ENCODE measurements at regions of chr14 and their contacts with region 1.

Region 1: GRCh38 chr14:61638595-61639387 is 56.5 kb upstream of the HIF1A start:
- DNase-seq: no peak
- H3K4me3 ChIP-seq: no peak overlapping the region
- H3K4me3 Mint-ChIP-seq: no peak overlapping the region
- H3K27ac ChIP-seq: no peak overlapping the region
- H3K27ac Mint-ChIP-seq: no peak overlapping the region
- H3K4me1 ChIP-seq: no peaks in the 10 kb centered on the region
- H3K4me1 Mint-ChIP-seq: peaks cover 0 to 6% (median 1%) of the 10 kb centered on the region in 4 donors
- H3K27me3 ChIP-seq: no peaks in the 10 kb centered on the region
- H3K27me3 Mint-ChIP-seq: no peaks in the 10 kb centered on the region

Region 2: DNA sequence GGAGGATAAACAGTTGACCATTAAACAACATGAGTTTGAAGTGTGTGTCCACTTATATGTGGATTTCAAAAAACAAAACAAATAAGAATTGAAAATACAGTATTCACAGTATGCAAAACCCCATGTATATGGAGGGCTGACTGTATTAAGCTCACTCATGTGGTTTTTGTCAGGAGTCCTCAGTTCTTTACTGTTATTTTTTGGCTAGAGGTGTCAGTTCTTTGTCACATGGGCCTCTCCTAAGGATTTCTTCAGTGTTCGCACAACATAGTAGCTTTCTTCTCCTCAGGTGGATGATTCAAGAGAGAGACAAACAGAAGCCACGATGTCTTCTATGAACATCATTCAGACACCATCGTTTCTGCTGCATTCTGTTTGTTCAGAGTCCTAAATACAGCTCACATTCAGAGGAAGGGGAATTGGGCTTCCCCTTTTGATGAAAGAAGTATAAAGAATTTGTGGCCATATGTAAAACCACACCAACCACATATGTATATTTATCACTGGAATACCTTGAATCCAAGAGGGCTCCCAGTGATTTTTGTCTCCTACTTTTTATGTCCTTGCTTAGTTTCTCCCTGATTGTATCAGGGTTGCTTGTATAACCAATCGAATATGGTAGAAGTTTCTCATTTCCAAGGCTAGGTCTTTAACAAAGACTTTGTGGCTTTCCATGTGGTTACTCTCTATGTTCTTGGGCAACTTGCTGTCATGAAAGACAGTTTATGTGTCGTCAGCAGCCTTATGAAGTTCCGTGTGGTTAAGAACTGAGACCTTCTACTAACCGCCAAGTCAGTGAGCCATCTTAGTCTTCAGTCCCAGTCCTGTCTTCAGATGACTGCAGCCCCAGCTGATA is 885.3 kb before region 1 on chr14:
- CTCF ChIA-PET with region 1: no interaction called
- POLR2A ChIA-PET with region 1: no interaction called
- intact Hi-C with region 1: no loop called
- DNase-seq: peak; percentile 75 to 83 (median 79)
- H3K4me3 ChIP-seq: no peak overlapping the region
- H3K4me3 Mint-ChIP-seq: peak overlapping the region in 6 of 8 donors; percentile 40 to 69 (median 60)
- H3K27ac ChIP-seq: no peak overlapping the region
- H3K27ac Mint-ChIP-seq: peak overlapping the region; percentile 69 to 88 (median 83)
- H3K4me1 ChIP-seq: peaks cover 29% of the 10 kb centered on the region
- H3K4me1 Mint-ChIP-seq: peaks cover 20 to 27% (median 24%) of the 10 kb centered on the region in 4 donors
- H3K27me3 ChIP-seq: no peaks in the 10 kb centered on the region
- H3K27me3 Mint-ChIP-seq: peaks cover 0 to 1% of the 10 kb centered on the region in 2 donors

Region 3: DNA sequence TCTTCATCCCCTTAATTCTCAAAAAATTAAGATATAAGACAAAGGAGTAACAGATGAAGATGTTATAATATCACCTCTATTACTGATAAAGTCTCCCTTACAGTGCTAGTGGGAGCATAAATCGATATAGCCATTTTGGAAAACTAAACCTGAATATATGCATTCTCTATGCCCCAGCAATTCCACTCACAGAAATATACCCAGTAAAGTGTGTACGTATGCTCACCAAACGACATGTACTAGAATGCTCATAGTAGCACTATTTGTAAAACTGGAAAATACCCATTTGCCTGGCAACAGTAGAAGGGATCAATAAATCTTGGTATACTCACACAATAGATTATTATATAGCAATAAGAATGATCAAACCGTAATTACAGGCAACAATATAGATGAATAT is 12.6 kb after region 1 on chr14:
- CTCF ChIA-PET with region 1: no interaction called
- POLR2A ChIA-PET with region 1: no interaction called
- intact Hi-C with region 1: loop called (anchors 1 kb)
- DNase-seq: no peak
- H3K4me3 ChIP-seq: no peak overlapping the region
- H3K4me3 Mint-ChIP-seq: no peak overlapping the region
- H3K27ac ChIP-seq: no peak overlapping the region
- H3K27ac Mint-ChIP-seq: no peak overlapping the region
- H3K4me1 ChIP-seq: peaks cover 29% of the 10 kb centered on the region
- H3K4me1 Mint-ChIP-seq: peaks cover 29 to 49% (median 37%) of the 10 kb centered on the region in 4 donors
- H3K27me3 ChIP-seq: no peaks in the 10 kb centered on the region
- H3K27me3 Mint-ChIP-seq: no peaks in the 10 kb centered on the region